Ascending aorta (tissue), 2 donors: ENCODE measurements at regions of chr1 and their contacts with region 1.

Region 1: GRCh38 chr1:225777583-225778336 is at the start of gene SRP9:
- DNase-seq: peak; percentile 97 to 100
- H3K4me3 ChIP-seq: peak within 1 kb of the TSS; percentile 68 to 89
- H3K27ac ChIP-seq: peak within 1 kb of the TSS; percentile 89 to 95
- H3K4me1 ChIP-seq: peaks cover 0 to 30% of the 10 kb centered on the region in 2 donors
- H3K27me3 ChIP-seq: no peaks in the 10 kb centered on the region
- CTCF ChIP-seq: peak; percentile 86 to 93 (median 90)
- total RNA-seq, gene SRP9: 49.4 TPM

Region 2: DNA sequence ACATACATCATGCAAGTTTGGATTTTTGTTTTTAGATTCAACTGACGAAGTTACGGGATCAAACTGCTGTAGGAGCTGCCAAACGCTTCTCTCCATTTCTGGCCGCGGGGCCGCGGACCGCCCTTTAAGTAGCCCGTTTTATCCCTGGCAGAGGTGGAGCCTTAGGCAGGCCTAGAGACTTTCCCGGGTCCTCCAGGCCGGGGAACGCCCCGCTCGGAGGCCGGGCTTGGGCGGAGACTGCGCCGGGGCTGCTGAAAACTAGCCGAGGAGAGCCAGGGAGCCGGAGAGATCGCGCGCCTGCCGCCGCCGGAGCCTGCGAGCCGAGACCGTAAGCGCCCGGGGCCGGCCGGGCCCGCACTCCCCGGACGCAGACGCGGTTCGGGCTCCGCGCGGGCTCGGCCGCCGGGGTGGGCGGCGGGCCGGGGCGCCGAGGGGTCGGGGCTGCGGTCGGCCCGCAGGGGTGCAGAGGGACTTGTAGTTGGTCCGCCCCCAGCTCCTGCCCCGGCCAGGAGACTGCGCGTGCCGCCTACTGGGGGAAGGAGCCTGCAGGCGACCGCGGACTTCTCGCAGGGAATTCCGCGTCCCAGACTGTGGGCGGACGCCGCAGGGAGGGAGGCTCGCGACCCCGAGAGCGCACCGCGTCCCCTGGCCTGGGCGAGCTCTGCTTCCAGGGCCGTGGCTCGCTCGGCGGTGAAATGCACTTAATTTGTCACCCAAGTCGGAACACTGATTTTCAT is 32.2 kb after region 1 on chr1 and contains the start of gene EPHX1:
- intact Hi-C with region 1: loop called (anchors 1 kb)
- DNase-seq: peak; percentile 56 to 94
- H3K4me3 ChIP-seq: peak within 1 kb of the TSS; percentile 66 to 89
- H3K27ac ChIP-seq: peak within 1 kb of the TSS; percentile 84 to 90
- H3K4me1 ChIP-seq: peaks cover 19 to 32% of the 10 kb centered on the region in 2 donors
- H3K27me3 ChIP-seq: no peaks in the 10 kb centered on the region
- CTCF ChIP-seq: peak; percentile 33 to 43 (median 33)
- total RNA-seq, gene EPHX1: 127 TPM

Region 3: DNA sequence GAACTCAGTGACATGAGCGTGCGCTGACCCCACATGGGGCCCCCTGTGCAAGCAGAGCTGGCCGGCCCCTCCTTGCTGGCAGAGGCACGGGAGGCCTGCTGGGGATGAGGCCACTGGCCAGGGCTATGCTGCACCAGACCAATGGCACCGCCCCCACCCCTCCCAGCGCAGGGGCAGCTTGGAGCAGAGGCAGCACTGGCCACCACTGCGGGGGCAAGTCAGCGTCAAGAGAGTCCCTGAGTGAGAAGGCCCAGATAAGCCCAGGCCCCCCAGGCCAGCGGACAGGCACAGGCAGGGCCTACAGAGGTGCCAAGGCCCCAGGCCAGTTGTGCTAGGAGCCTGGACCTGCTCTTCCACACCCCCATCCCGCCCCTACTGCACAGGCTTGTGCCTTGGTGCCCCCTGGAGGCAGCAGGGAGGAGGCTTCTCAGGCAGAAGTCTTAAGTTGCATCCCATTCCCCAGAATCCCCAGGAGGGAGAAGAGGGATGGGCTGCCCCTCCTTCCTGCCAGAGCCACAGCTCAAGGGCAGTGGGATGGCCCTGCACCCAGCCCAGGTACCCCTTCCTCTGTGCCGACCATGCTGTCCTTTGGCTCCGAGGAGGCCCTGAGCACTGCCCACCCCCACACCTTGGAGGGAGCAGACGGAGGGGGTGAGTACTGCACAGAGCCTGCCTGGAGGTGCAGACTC is 68.0 kb after region 1 on chr1:
- intact Hi-C with region 1: loop called (anchors 1 kb)
- DNase-seq: peak in 1 of 2 donors; percentile 89
- H3K4me3 ChIP-seq: no peak overlapping the region
- H3K27ac ChIP-seq: peak overlapping the region in 1 of 2 donors; percentile 35
- H3K4me1 ChIP-seq: peaks cover 0 to 2% of the 10 kb centered on the region in 2 donors
- H3K27me3 ChIP-seq: no peaks in the 10 kb centered on the region
- CTCF ChIP-seq: peak; percentile 71 to 85 (median 81)

Region 4: GRCh38 chr1:225911191-225912130 is 133.7 kb after region 1 on chr1:
- intact Hi-C with region 1: loop called (anchors 1 kb)
- DNase-seq: peak in 1 of 2 donors; percentile 79
- H3K4me3 ChIP-seq: no peak overlapping the region
- H3K27ac ChIP-seq: no peak overlapping the region
- H3K4me1 ChIP-seq: peaks cover 0 to 4% of the 10 kb centered on the region in 2 donors
- H3K27me3 ChIP-seq: no peaks in the 10 kb centered on the region
- CTCF ChIP-seq: peak; percentile 92 to 97 (median 96)

Region 5: DNA sequence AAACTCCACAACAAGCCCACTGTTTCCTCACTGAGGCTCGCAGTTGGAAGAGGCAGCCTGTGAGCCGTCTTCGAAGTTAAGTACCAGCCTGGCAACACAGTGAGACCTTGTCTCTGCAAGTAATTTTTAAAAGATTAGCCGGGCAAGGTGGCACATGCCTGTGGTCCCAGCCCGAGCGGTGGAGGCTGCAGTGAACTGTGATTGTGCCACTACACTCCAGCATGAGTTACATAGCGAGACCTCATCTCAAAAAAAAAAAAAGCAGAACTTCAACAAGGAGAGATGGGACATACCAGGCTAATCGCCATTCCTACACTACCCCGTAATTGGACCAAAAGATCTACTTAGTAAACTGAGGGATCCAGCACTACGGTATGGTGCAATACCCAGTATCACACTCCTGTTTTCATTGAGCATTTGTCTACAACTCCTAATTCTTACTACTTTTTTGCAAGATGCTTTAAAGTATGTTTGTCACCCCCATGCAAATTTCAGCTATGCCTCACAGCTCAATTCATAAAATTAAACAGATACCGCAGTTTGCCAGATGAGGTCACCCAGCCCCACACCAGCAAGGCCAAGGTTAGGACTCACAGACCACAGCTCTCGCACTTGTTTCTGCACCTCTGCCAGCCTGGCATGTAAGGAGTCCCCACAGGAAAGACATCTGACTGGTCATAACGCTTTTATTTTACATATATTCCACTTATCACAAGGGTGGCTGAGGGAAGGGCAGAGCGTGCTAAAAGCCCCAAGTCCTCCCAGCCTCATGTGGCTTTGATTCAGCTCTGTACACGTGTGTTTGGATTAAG is 200.4 kb after region 1 on chr1:
- intact Hi-C with region 1: loop called (anchors 5 kb)
- DNase-seq: no peak
- H3K4me3 ChIP-seq: no peak overlapping the region
- H3K27ac ChIP-seq: no peak overlapping the region
- H3K4me1 ChIP-seq: no peaks in the 10 kb centered on the region
- H3K27me3 ChIP-seq: no peaks in the 10 kb centered on the region
- CTCF ChIP-seq: no peak